Activated CD4-positive, alpha-beta T cell treated with anti-CD3 and anti-CD28 coated beads for 36 hours (primary cell): ENCODE measurements at regions of chr18 and their contacts with region 1.

Region 1: DNA sequence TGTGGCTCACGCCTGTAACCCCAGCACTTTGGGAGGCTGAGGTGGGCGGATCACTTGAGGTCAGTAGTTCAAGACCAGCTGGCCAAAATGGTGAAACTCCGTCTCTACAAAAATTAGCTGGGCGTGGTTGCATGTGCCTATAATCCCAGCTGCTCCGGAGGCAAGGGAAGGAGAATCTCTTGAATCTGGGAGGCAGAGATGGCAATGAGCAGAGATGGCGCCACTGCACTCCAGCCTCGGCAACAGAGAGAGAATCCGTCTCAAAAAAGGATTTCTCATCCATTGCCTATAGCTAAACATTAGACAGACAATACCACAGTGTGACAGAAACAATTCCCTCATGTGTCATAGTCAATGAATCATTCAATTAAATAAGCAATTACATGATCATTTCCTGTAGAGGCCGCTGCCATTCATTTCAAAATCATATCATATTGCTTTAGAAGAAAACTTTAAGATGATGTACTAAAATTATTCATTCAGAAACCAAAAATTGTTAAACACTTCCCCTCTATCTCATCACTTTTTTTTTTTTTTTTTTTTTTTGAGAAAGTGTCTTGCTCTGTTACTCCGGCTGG is 69.5 kb upstream of the TGIF1 start:
- DNase-seq: peak; percentile 49
- ATAC-seq: peak; percentile 97
- H3K4me3 Mint-ChIP-seq: no peak overlapping the region
- H3K27ac Mint-ChIP-seq: no peak overlapping the region
- H3K4me1 Mint-ChIP-seq: peaks cover 10% of the 10 kb centered on the region
- H3K27me3 Mint-ChIP-seq: peaks cover 10% of the 10 kb centered on the region

Region 2: GRCh38 chr18:3305354-3305762 is 75.1 kb before region 1 on chr18:
- CTCF ChIA-PET with region 1: no interaction called
- POLR2A ChIA-PET with region 1: no interaction called
- intact Hi-C with region 1: loop called (anchors 1 kb)
- DNase-seq: peak; percentile 72
- ATAC-seq: peak; percentile 98
- H3K4me3 Mint-ChIP-seq: peak overlapping the region; percentile 20
- H3K27ac Mint-ChIP-seq: peak overlapping the region; percentile 89
- H3K4me1 Mint-ChIP-seq: peaks cover 20% of the 10 kb centered on the region
- H3K27me3 Mint-ChIP-seq: peaks cover 16% of the 10 kb centered on the region

Region 3: GRCh38 chr18:3340015-3340681 is 40.3 kb before region 1 on chr18:
- CTCF ChIA-PET with region 1: no interaction called
- POLR2A ChIA-PET with region 1: interaction called, 5 read pairs
- intact Hi-C with region 1: loop called in 1 of 2 experiments (anchors 1 kb)
- DNase-seq: no peak
- ATAC-seq: peak; percentile 92
- H3K4me3 Mint-ChIP-seq: no peak overlapping the region
- H3K27ac Mint-ChIP-seq: peak overlapping the region; percentile 73
- H3K4me1 Mint-ChIP-seq: peaks cover 21% of the 10 kb centered on the region
- H3K27me3 Mint-ChIP-seq: no peaks in the 10 kb centered on the region

Region 4: DNA sequence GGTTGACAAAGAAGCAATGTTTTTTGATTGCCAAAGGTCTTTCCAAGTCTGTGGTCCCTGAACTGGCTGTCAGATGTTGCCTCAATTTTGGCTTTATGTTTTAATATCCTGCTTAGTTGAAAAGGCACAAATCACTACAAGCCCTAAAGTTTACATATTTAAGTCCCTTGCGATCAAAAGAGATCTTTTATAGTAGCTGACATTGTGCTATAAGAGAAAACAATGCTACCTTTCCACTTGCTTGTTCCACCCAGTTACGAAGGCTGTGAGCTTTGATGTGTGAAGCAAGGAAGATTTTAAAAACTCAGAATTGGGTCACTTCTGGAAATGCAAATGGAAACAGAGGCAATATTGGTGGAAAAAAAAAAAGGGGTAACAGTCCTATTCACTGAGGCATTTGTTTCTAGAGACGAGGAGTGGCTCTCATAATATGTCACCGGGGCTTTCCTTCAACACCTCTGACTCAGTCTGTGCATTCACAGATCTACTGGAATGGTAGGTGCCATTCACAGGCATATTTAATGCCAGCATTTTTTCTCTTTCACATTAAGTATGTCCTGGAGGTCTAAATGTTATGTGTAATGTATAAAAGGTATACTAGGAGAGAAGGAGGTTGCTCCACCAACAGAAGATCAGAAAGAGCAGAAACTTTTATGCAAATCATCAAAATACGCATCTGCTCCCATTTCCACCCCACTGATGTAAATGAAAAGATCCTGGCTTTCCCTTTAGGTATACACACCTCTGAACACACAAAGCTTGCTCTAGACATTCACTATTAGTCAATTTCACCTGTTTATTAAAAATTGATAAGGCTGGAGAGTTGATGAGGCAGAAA is 161.3 kb after region 1 on chr18:
- CTCF ChIA-PET with region 1: interaction called, 3 read pairs
- POLR2A ChIA-PET with region 1: no interaction called
- intact Hi-C with region 1: loop called in 1 of 2 experiments (anchors 2 kb)
- DNase-seq: peak; percentile 65
- ATAC-seq: peak; percentile 96
- H3K4me3 Mint-ChIP-seq: peak overlapping the region; percentile 16
- H3K27ac Mint-ChIP-seq: peak overlapping the region; percentile 74
- H3K4me1 Mint-ChIP-seq: peaks cover 32% of the 10 kb centered on the region
- H3K27me3 Mint-ChIP-seq: peaks cover 2% of the 10 kb centered on the region